CD8-positive, alpha-beta memory T cell (primary cell): ENCODE measurements at regions of chr14 and their contacts with region 1.

Region 1: DNA sequence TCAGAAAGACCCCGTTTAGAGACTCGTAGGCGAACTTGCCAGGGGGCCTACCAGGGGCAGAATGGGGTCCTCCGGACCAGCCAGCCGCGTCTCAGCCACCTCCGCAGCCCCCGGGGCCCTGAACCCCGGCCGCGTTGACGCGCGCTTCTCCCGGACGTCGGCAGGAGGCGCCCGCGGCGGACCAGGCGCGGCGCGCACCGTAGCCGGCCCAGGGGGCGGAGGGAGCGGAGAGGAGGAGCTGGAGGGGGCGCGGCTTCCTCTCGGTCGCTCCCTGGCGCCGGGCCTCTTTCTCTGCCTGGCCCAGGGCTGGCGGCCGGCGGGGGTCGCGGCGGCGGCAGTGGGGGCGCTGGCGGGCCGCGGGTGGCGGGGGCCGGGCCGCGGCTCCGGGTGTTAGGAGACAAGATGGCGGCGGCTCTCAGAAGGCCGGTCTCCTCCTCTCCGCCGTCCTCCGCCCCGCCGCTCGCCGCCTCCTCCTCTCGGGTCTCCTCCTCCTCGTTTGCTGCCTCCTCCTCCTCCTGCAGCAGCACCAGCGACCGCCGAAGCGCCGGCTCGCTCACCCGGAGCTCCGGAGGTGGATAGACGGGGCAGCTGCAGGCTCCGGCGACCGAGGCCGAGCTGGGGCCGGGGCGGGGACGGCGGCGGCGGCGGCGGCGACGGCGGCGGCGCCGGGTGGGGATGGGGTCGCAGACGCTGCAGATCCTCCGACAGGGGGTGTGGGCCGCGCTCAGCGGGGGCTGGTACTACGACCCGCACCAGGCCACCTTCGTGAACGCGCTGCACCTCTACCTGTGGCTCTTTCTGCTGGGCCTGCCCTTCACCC is at the start of gene PCNX1:
- DNase-seq: peak; percentile 84 to 95 (median 92)
- H3K4me3 ChIP-seq: peak within 1 kb of the TSS; percentile 92
- H3K4me3 Mint-ChIP-seq: peak within 1 kb of the TSS; percentile 82 to 99 (median 96)
- H3K27ac ChIP-seq: peak within 1 kb of the TSS; percentile 66
- H3K27ac Mint-ChIP-seq: peak within 1 kb of the TSS; percentile 91 to 99 (median 98)
- H3K4me1 ChIP-seq: peaks cover 41% of the 10 kb centered on the region
- H3K4me1 Mint-ChIP-seq: peaks cover 48 to 68% (median 61%) of the 10 kb centered on the region in 3 donors
- H3K27me3 ChIP-seq: no peaks in the 10 kb centered on the region
- H3K27me3 Mint-ChIP-seq: no peaks in the 10 kb centered on the region
- total RNA-seq, gene PCNX1: 37.4 to 46.2 TPM

Region 2: DNA sequence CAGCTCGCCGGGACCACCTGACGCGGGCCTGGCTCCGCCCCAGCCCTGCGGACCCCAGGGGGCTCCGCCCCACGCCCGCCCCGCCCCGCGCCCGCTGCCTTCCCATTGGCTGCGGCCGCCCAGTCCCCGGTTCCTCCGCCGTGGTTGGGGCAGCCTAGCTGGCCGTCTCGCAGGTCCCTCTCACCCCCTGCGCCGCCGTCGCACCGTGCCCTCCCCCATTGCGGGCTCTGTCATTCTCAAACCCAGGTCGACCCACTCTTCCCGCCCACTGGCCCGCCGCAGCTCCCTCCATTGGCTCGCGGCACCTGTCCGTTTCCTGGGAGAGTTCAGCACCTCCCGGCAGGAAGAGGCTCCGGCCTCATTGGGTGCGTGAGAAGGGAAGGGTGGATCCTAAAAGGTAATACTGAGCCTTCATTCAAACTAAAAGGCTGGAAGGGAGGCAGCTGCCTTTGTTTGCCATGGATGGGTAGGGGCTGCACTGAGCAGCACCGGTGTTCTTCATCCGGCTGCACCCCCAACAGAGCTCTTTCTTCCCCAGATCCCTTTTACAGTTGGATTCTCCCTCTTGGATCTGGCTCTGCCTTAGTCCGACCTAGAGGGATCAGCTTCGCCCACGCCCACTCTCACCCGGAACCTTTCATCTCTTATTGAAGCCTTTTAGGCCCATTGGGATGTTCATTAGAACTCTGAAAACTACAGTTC is 97.7 kb before region 1 on chr14:
- CTCF ChIA-PET with region 1: interaction called, 16 read pairs
- POLR2A ChIA-PET with region 1: no interaction called
- DNase-seq: peak; percentile 84 to 91 (median 89)
- H3K4me3 ChIP-seq: peak overlapping the region; percentile 47
- H3K4me3 Mint-ChIP-seq: peak overlapping the region in 1 of 7 donors; percentile 92
- H3K27ac ChIP-seq: peak overlapping the region; percentile 3
- H3K27ac Mint-ChIP-seq: peak overlapping the region in 3 of 8 donors; percentile 48 to 90 (median 67)
- H3K4me1 ChIP-seq: peaks cover 13% of the 10 kb centered on the region
- H3K4me1 Mint-ChIP-seq: peaks cover 11 to 14% (median 13%) of the 10 kb centered on the region in 3 donors
- H3K27me3 ChIP-seq: no peaks in the 10 kb centered on the region
- H3K27me3 Mint-ChIP-seq: no peaks in the 10 kb centered on the region

Region 3: GRCh38 chr14:70887207-70887681 is 20.1 kb before region 1 on chr14:
- CTCF ChIA-PET with region 1: interaction called, 53 read pairs
- POLR2A ChIA-PET with region 1: interaction called, 17 read pairs
- DNase-seq: no peak
- H3K4me3 ChIP-seq: peak overlapping the region; percentile 40
- H3K4me3 Mint-ChIP-seq: peak overlapping the region; percentile 19 to 84 (median 71)
- H3K27ac ChIP-seq: no peak overlapping the region
- H3K27ac Mint-ChIP-seq: peak overlapping the region; percentile 70 to 95 (median 88)
- H3K4me1 ChIP-seq: peaks cover 68% of the 10 kb centered on the region
- H3K4me1 Mint-ChIP-seq: peaks cover 70 to 93% (median 87%) of the 10 kb centered on the region in 3 donors
- H3K27me3 ChIP-seq: no peaks in the 10 kb centered on the region
- H3K27me3 Mint-ChIP-seq: peaks cover 0 to 1% of the 10 kb centered on the region in 2 donors

Region 4: DNA sequence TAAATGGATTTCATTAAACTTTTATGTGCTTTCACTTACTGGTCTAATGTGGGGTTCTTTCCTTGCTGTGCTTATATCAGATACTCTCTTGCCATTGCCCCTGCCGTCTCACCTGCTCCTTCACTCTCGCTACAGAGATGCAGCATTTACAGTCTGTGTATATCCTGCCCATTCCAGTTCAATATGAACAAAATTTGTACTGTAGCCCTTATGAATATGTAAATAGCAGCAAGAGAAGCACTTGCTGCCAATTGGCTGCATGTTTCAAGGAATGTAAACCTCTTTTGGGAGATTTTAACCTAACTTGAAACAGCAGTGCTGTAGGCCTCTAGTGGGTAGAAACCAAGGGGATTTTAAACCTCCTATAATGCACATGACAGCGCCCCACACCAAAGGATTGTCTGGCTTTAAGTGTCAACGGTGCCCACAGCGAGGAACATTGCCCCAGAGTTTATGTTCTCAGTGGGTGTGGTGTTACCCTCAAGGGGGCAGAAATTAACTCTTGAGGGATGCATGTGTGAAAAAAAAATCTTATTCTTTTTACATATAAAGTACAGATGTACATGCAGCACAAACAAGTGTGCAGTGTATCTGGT is 18.9 kb after region 1 on chr14:
- CTCF ChIA-PET with region 1: interaction called, 55 read pairs
- POLR2A ChIA-PET with region 1: interaction called, 3 read pairs
- DNase-seq: peak in 2 of 5 donors; percentile 24 to 37
- H3K4me3 ChIP-seq: no peak overlapping the region
- H3K4me3 Mint-ChIP-seq: peak overlapping the region in 6 of 7 donors; percentile 7 to 64 (median 36)
- H3K27ac ChIP-seq: no peak overlapping the region
- H3K27ac Mint-ChIP-seq: peak overlapping the region; percentile 6 to 72 (median 54)
- H3K4me1 ChIP-seq: peaks cover 50% of the 10 kb centered on the region
- H3K4me1 Mint-ChIP-seq: peaks cover 78 to 97% (median 97%) of the 10 kb centered on the region in 3 donors
- H3K27me3 ChIP-seq: no peaks in the 10 kb centered on the region
- H3K27me3 Mint-ChIP-seq: no peaks in the 10 kb centered on the region

Region 5: GRCh38 chr14:70947711-70948110 is 40.3 kb after region 1 on chr14:
- CTCF ChIA-PET with region 1: interaction called, 174 read pairs
- POLR2A ChIA-PET with region 1: interaction called, 10 read pairs
- DNase-seq: no peak
- H3K4me3 ChIP-seq: no peak overlapping the region
- H3K4me3 Mint-ChIP-seq: no peak overlapping the region
- H3K27ac ChIP-seq: no peak overlapping the region
- H3K27ac Mint-ChIP-seq: peak overlapping the region in 2 of 8 donors; percentile 12 to 88
- H3K4me1 ChIP-seq: peaks cover 4% of the 10 kb centered on the region
- H3K4me1 Mint-ChIP-seq: peaks cover 37 to 47% (median 46%) of the 10 kb centered on the region in 3 donors
- H3K27me3 ChIP-seq: no peaks in the 10 kb centered on the region
- H3K27me3 Mint-ChIP-seq: no peaks in the 10 kb centered on the region

Region 6: DNA sequence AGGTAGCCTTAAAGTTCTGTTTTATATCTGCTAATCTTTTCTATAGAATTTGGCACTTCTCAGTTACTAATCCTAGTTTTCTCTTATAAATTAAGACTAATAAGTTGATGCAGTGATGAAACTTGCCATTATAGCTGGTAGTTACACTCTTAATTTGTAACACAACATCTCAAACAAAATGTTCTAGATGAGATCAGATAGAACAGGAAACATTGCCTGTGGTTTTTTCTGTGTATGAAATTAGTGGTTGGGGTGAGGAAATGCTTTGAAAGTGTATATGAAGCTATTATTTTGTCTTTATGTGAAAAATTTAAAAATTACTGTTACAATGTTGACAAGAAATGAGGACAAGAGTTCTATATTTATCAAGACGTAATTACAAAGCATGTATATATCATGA is 91.7 kb after region 1 on chr14:
- CTCF ChIA-PET with region 1: interaction called, 23 read pairs
- POLR2A ChIA-PET with region 1: interaction called, 3 read pairs
- DNase-seq: peak in 2 of 5 donors; percentile 47 to 48
- H3K4me3 ChIP-seq: peak overlapping the region; percentile 7
- H3K4me3 Mint-ChIP-seq: peak overlapping the region; percentile 58 to 78 (median 63)
- H3K27ac ChIP-seq: no peak overlapping the region
- H3K27ac Mint-ChIP-seq: peak overlapping the region; percentile 43 to 96 (median 70)
- H3K4me1 ChIP-seq: peaks cover 80% of the 10 kb centered on the region
- H3K4me1 Mint-ChIP-seq: peaks cover 70 to 95% (median 89%) of the 10 kb centered on the region in 3 donors
- H3K27me3 ChIP-seq: no peaks in the 10 kb centered on the region
- H3K27me3 Mint-ChIP-seq: no peaks in the 10 kb centered on the region